ENCODE measurements at regions of chr11 and their contacts with region 1.

Region 1: DNA sequence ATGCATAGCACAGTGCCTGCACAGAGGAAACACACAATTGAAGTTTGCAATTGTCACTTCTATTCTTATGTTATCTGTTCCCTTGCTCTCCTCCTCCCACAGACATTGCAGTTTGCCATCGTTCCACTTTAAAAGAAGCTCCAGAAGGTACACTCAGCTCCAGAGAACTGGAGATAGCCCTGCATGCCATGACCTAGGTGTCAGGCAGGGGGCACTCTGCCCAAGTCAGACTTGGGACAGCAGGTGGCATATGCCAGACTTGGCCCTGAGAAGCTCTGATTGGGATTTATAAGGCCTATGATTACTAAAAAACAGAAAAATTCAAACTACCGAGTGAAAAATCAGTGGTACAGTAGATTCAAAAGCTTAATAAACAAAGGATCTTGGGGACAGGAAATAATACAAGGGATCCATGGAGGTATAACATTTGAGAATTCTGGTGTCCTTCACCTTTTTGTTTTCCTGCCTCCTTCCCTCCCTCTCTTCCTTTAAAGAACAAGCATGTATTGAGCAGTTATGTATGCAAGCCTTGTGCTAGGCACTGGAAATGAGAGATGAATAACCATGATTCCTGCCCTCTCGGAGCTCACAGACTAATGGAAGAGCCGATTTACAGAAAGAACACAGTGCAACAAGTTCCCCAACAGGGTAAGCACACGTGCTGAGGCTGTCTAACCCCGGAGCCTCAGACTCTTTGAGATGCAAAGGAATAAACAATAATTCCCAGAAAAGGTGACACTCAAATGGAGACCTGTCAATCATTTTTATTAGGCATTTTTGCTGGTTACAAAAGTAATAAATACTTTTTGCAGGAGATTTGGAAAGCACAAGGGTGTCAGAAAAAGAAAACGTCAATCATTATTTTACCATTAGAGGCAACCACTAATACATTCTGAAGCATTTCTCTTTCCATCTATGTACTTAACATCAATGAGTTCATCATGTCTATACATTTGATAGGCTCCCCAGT is 39.8 kb downstream of the TENM4 start:
- DNase-seq: peak; percentile 70
- H3K4me3 Mint-ChIP-seq: no peak overlapping the region
- H3K27ac Mint-ChIP-seq: no peak overlapping the region
- H3K4me1 Mint-ChIP-seq: peaks cover 11% of the 10 kb centered on the region
- H3K27me3 Mint-ChIP-seq: no peaks in the 10 kb centered on the region
- CTCF ChIP-seq: peak; percentile 94

Region 2: DNA sequence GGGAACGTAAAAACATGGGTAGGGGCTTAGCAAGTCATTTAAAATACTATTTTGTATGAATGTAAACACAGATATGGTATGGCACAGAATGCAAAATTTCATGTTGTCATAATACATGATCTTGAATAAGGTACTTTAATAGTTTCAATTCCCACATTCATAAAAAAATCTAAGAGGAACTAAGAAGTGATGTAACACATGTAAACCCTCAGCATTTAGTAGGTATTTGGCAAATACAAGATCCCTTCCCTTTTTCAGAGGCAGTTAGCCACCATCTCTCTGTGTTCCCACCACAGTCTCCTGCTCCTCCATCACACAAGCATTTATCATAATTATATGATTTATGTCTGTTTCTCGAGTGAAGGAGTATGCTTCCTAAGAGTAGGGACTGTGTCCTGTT is 211.9 kb before region 1 on chr11:
- CTCF ChIA-PET with region 1: no interaction called
- POLR2A ChIA-PET with region 1: no interaction called
- intact Hi-C with region 1: no loop called
- DNase-seq: no peak
- H3K4me3 Mint-ChIP-seq: no peak overlapping the region
- H3K27ac Mint-ChIP-seq: no peak overlapping the region
- H3K4me1 Mint-ChIP-seq: no peaks in the 10 kb centered on the region
- H3K27me3 Mint-ChIP-seq: no peaks in the 10 kb centered on the region
- CTCF ChIP-seq: no peak

Region 3: DNA sequence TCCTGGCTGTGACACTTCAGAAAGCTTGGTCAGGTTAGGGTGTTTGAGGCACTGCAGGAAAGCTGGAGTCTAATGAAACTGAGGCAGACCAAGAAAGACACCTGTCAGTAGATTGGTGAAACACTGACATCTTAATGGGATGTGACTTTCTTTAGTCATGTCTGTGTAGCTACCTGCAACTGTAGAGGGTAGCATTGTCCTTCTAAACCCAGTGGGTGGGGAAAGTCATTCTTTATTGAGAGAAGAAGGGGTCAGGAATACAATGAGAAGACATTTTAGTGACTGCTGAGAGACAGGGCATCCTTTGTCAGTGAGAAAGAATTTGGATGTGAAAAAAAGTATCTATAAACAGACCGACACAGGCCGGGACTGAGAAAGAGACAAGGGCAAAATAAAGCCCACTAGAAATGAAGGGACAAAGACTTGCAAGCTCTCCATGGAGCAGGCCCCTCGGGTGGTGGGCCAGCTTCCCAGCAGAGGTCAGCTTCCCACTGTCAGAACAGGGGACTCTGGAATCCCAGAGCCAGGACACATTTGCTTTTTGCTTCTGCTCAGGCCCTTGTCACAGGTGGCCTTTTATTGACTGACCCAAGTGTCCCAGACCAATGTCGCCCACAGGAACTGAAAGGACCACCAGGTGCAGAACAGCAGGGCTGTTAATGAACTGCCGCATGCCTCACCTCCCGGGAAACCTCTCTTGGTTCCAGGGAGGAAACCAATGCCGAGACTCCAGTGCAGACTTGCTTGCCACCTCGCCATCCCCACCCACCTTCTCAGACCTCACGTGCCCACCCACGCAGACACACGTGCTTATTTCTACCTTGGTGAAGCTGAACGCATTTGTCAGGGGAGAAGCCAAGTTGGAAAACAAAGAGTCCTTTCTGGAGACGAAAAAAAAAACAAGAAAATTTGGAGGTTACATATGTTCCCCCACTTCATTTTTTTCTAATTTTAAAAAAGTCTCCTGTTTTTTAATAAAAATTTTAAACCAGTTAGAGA is 172.9 kb before region 1 on chr11:
- CTCF ChIA-PET with region 1: no interaction called
- POLR2A ChIA-PET with region 1: no interaction called
- intact Hi-C with region 1: no loop called
- DNase-seq: no peak
- H3K4me3 Mint-ChIP-seq: no peak overlapping the region
- H3K27ac Mint-ChIP-seq: no peak overlapping the region
- H3K4me1 Mint-ChIP-seq: no peaks in the 10 kb centered on the region
- H3K27me3 Mint-ChIP-seq: no peaks in the 10 kb centered on the region
- CTCF ChIP-seq: no peak

Region 4: GRCh38 chr11:79321263-79321662 is 79.7 kb before region 1 on chr11:
- CTCF ChIA-PET with region 1: no interaction called
- POLR2A ChIA-PET with region 1: no interaction called
- intact Hi-C with region 1: no loop called
- DNase-seq: no peak
- H3K4me3 Mint-ChIP-seq: no peak overlapping the region
- H3K27ac Mint-ChIP-seq: peak overlapping the region; percentile 39
- H3K4me1 Mint-ChIP-seq: peaks cover 22% of the 10 kb centered on the region
- H3K27me3 Mint-ChIP-seq: no peaks in the 10 kb centered on the region
- CTCF ChIP-seq: no peak

Region 5: GRCh38 chr11:79413268-79413667 is 12.3 kb after region 1 on chr11:
- CTCF ChIA-PET with region 1: interaction called, 62 read pairs
- POLR2A ChIA-PET with region 1: interaction called, 4 read pairs
- intact Hi-C with region 1: no loop called
- DNase-seq: peak; percentile 91
- H3K4me3 Mint-ChIP-seq: no peak overlapping the region
- H3K27ac Mint-ChIP-seq: no peak overlapping the region
- H3K4me1 Mint-ChIP-seq: peaks cover 45% of the 10 kb centered on the region
- H3K27me3 Mint-ChIP-seq: no peaks in the 10 kb centered on the region
- CTCF ChIP-seq: no peak

Region 6: GRCh38 chr11:79419120-79419519 is 18.1 kb after region 1 on chr11:
- CTCF ChIA-PET with region 1: interaction called, 18 read pairs
- POLR2A ChIA-PET with region 1: interaction called, 4 read pairs
- intact Hi-C with region 1: no loop called
- DNase-seq: peak; percentile 96
- H3K4me3 Mint-ChIP-seq: peak overlapping the region; percentile 16
- H3K27ac Mint-ChIP-seq: peak overlapping the region; percentile 80
- H3K4me1 Mint-ChIP-seq: peaks cover 45% of the 10 kb centered on the region
- H3K27me3 Mint-ChIP-seq: no peaks in the 10 kb centered on the region
- CTCF ChIP-seq: no peak

Region 7: DNA sequence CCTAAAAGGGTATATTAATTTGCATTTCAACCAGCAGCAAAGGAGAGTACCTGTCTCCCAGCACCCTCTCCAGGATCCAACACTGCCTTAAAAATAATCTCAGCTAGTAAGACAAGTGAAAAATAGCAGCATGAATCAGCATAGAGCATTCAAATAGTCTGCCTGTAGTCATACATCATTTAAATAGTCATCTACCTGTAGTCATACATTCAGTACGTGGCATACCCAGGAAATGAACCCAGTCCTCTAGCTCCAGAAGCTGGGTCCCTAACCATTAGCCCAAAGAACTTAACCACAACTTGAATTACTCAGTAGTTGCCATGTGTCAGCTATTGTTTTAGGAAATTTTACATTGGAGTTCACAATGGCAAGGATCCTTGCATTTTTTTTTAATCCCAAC is 30.5 kb after region 1 on chr11:
- CTCF ChIA-PET with region 1: interaction called, 15 read pairs
- POLR2A ChIA-PET with region 1: interaction called, 4 read pairs
- intact Hi-C with region 1: loop called (anchors 1 kb)
- DNase-seq: peak; percentile 68
- H3K4me3 Mint-ChIP-seq: no peak overlapping the region
- H3K27ac Mint-ChIP-seq: peak overlapping the region; percentile 75
- H3K4me1 Mint-ChIP-seq: peaks cover 8% of the 10 kb centered on the region
- H3K27me3 Mint-ChIP-seq: no peaks in the 10 kb centered on the region
- CTCF ChIP-seq: no peak

Region 8: GRCh38 chr11:79503028-79503427 is 102.0 kb after region 1 on chr11:
- CTCF ChIA-PET with region 1: interaction called, 14 read pairs
- POLR2A ChIA-PET with region 1: no interaction called
- intact Hi-C with region 1: no loop called
- DNase-seq: no peak
- H3K4me3 Mint-ChIP-seq: no peak overlapping the region
- H3K27ac Mint-ChIP-seq: no peak overlapping the region
- H3K4me1 Mint-ChIP-seq: peaks cover 12% of the 10 kb centered on the region
- H3K27me3 Mint-ChIP-seq: no peaks in the 10 kb centered on the region
- CTCF ChIP-seq: no peak

Measured in MCF 10A (cell line).